Activated B cell treated with CpG ODN at 0.5 μM for 24 hours (primary cell): ENCODE measurements at regions of chr9 and their contacts with region 1.

Region 1: DNA sequence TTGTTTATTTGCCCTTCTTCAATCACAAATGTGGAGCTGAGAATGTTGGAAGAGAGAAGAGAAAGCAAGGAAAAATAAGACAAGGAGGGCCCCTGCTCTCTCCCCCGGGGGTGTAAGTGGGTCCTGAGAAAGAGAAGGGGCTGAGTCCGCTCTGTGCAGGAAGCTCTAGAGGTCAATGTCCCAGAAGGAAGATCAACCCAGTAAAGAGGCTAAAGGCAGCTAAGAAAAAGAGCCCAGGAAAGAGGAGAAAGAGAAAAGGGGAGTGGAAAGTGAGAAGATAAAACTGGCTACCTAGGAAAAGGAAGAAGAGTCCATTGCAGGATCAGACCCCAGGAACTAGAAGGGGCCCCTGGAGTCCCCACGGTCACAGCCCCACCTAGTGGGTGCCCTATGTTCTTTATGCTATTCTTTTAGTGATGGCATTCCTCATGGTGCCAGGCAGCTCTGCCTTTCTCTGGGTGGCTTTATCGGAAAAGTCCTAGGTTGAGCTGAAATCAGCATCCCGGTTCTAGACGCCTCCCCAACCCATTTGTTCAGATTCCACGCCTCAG is 583.4 kb downstream of the ACTL7B start:
- DNase-seq: no peak
- ATAC-seq: no peak
- H3K4me3 Mint-ChIP-seq: no peak overlapping the region
- H3K27ac Mint-ChIP-seq: peak overlapping the region; percentile 32
- H3K4me1 Mint-ChIP-seq: peaks cover 4% of the 10 kb centered on the region
- H3K27me3 Mint-ChIP-seq: no peaks in the 10 kb centered on the region
- CTCF ChIP-seq: no peak

Region 2: DNA sequence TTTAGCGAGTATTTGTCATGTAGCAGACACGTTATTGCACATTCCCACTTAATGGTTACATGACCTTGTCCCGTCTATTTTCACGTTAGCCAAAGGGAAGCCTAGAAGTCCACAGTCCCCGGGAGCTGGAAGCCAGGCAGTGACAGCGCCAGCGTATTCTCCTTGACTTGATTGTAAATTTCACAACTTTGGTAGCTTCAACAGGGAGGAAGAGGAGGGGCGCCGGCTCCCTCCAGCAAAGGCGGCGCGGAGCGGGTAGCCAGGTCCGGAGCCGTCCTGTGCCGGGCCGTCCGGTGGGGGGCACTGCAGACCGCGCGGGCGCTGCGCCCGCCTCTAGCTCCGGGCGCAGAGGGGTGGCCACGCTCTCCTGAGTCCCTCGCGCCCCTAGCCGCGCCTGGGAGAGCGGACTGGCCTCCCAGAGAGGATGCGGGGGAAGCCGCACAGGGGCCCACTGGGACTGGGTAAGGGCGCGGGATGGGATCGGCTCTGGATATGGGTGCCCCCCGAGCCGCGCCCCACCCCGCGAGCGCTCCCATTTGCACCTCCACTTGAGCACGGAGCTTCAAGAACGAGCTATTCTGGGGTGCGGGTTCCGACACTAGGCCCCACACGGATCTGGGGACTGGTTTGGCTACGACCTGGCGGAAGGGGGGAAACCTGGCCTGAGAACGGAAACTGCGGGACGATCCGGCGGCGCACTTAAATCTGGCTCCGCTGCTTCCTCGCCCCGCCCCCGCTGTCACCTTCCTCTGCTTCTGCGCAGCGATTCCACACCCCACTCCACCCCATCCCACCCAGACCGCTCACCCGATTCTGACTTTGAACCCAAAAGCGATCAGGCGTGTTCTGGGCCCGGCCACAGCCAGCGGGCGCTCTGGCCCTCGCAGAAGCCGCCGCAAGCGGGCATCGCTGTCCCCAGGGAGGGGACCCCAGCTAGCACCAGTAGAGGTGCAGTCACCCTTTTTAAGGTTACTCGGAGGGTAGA is 806.7 kb before region 1 on chr9:
- CTCF ChIA-PET with region 1: interaction called, 3 read pairs
- POLR2A ChIA-PET with region 1: no interaction called
- intact Hi-C with region 1: loop called (anchors 1 kb)
- DNase-seq: peak; percentile 50
- ATAC-seq: peak; percentile 90
- H3K4me3 Mint-ChIP-seq: peak overlapping the region; percentile 67
- H3K27ac Mint-ChIP-seq: no peak overlapping the region
- H3K4me1 Mint-ChIP-seq: peaks cover 8% of the 10 kb centered on the region
- H3K27me3 Mint-ChIP-seq: peaks cover 30% of the 10 kb centered on the region
- CTCF ChIP-seq: no peak